ENCODE measurements at regions of chr4 and their contacts with region 1.

Region 1: DNA sequence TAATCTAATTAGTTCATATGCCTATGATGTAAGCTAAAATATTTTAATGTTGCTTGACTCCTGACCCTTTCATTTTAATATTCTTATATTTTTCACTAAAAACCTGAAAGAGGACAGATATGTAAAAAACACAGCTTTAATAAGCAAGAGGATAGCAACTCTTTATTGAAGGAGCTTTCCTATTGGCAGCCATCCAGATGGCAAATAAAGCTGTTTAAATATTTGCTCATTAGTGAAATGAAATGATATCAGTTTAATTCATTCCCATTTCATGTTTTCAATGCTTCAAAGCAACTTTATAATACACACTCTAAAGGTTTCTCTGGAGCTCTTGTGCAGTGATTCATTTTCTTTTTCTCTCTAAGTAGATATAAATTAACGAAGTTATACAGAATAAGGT is 473.4 kb downstream of the PCDH7 start:
- DNase-seq: no peak
- CTCF ChIP-seq: no peak

Region 2: DNA sequence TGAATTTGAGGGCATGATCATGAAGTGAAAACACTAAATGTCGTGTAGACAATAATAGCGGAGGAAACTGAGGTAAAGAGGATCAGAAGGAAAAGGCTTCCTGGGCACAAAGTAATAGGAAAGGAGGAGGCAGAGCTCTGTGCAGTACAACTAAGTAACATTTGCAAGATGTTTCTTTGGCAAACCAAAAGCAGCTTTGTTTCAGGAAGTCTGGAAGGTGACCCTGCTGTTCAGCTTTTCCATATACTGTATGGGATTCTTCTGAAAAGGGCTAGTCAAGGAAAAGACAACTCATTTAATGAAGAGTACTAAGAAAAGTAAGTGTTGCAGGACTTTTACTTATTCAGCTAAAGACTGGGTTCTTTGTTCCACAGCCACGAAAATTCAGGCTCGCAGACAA is 10.3 kb before region 1 on chr4:
- CTCF ChIA-PET with region 1: interaction called, 10 read pairs
- POLR2A ChIA-PET with region 1: no interaction called
- DNase-seq: no peak
- CTCF ChIP-seq: no peak

Measured in GM10248 (cell line).